IMR-90 (cell line): ENCODE measurements at regions of chr10 and their contacts with region 1.

Region 1: GRCh38 chr10:132223156-132223590 is 36.4 kb downstream of the DPYSL4 start:
- DNase-seq: peak; percentile 71
- ATAC-seq: peak; percentile 99
- H3K4me3 ChIP-seq: no peak overlapping the region
- H3K27ac ChIP-seq: no peak overlapping the region
- H3K4me1 ChIP-seq: no peaks in the 10 kb centered on the region
- H3K27me3 ChIP-seq: no peaks in the 10 kb centered on the region
- CTCF ChIP-seq: peak; percentile 100
- POLR2A ChIP-seq: peak; percentile 45; the same call in 1 of the 2 replicates
- RAD21 ChIP-seq: peak; percentile 99

Region 2: GRCh38 chr10:132193907-132194552 is 29.1 kb before region 1 on chr10:
- CTCF ChIA-PET with region 1: no interaction called
- POLR2A ChIA-PET with region 1: no interaction called
- dilution Hi-C with region 1: no loop called
- in situ Hi-C with region 1: no loop called
- intact Hi-C with region 1: no loop called
- DNase-seq: no peak
- ATAC-seq: peak; percentile 80
- H3K4me3 ChIP-seq: no peak overlapping the region
- H3K27ac ChIP-seq: no peak overlapping the region
- H3K4me1 ChIP-seq: no peaks in the 10 kb centered on the region
- H3K27me3 ChIP-seq: no peaks in the 10 kb centered on the region
- CTCF ChIP-seq: no peak
- POLR2A ChIP-seq: no peak
- RAD21 ChIP-seq: no peak

Region 3: DNA sequence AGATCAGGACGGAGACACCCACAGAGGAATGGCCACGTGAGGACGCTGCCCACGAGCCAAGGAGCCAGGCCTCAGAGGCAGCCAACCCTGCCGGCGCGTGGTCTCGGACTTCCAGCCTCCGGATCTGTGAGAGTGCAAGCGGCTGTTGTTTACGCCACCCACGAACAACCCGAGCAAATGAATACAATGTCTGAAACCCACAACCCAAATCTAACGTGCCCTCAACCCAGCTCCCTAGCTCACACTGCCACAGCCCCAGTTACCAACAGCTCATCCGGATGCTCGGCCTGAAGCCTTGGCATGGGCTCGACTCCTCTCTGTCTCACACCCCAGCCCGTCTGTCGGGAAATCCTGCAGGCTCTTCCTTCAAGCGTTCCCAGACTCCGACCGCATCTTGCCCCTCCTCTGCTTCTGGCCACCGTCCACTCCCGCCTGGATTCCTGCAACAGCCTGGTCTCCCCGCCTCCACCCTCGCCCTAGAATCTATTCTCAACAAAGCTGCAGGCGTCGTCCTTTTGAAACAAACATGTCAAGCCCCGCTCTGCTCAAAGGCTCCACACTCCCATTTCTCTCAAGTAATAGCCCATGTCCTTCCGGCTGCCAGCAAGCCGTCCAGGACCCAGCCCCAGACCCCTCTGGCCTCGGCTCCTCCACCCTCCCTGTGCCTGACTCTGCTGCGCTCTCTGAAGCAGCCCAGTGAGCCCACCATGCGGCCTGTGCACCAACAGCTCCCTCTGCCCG is 49.2 kb after region 1 on chr10:
- CTCF ChIA-PET with region 1: no interaction called
- POLR2A ChIA-PET with region 1: no interaction called
- dilution Hi-C with region 1: no loop called
- in situ Hi-C with region 1: no loop called
- intact Hi-C with region 1: no loop called
- DNase-seq: peak; percentile 60
- ATAC-seq: peak; percentile 89
- H3K4me3 ChIP-seq: no peak overlapping the region
- H3K27ac ChIP-seq: no peak overlapping the region
- H3K4me1 ChIP-seq: peaks cover 5% of the 10 kb centered on the region; the same call in 1 of the 2 replicates
- H3K27me3 ChIP-seq: peaks cover 5% of the 10 kb centered on the region
- CTCF ChIP-seq: no peak
- POLR2A ChIP-seq: no peak
- RAD21 ChIP-seq: 0 out of 2 replicates have a peak, but pooled peaks have one; percentile 0

Region 4: GRCh38 chr10:132347211-132347930 is 124.2 kb after region 1 on chr10:
- CTCF ChIA-PET with region 1: interaction called, 3 read pairs
- POLR2A ChIA-PET with region 1: no interaction called
- dilution Hi-C with region 1: loop called (anchors 25 kb)
- in situ Hi-C with region 1: loop called (anchors 5 kb)
- intact Hi-C with region 1: loop called (anchors 1 kb)
- DNase-seq: no peak
- ATAC-seq: no peak
- H3K4me3 ChIP-seq: no peak overlapping the region
- H3K27ac ChIP-seq: no peak overlapping the region
- H3K4me1 ChIP-seq: no peaks in the 10 kb centered on the region
- H3K27me3 ChIP-seq: no peaks in the 10 kb centered on the region
- CTCF ChIP-seq: no peak
- POLR2A ChIP-seq: no peak
- RAD21 ChIP-seq: no peak

Region 5: GRCh38 chr10:132452631-132453469 is 229.7 kb after region 1 on chr10:
- CTCF ChIA-PET with region 1: no interaction called
- POLR2A ChIA-PET with region 1: no interaction called
- dilution Hi-C with region 1: no loop called
- in situ Hi-C with region 1: loop called (anchors 5 kb)
- intact Hi-C with region 1: loop called (anchors 1 kb)
- DNase-seq: peak; percentile 72
- ATAC-seq: peak; percentile 97
- H3K4me3 ChIP-seq: peak overlapping the region; percentile 15; the same call in 1 of the 2 replicates
- H3K27ac ChIP-seq: no peak overlapping the region
- H3K4me1 ChIP-seq: peaks cover 6% of the 10 kb centered on the region
- H3K27me3 ChIP-seq: peaks cover 9% of the 10 kb centered on the region; the same call in 1 of the 2 replicates
- CTCF ChIP-seq: peak; percentile 95
- POLR2A ChIP-seq: no peak
- RAD21 ChIP-seq: peak; percentile 89

Region 6: DNA sequence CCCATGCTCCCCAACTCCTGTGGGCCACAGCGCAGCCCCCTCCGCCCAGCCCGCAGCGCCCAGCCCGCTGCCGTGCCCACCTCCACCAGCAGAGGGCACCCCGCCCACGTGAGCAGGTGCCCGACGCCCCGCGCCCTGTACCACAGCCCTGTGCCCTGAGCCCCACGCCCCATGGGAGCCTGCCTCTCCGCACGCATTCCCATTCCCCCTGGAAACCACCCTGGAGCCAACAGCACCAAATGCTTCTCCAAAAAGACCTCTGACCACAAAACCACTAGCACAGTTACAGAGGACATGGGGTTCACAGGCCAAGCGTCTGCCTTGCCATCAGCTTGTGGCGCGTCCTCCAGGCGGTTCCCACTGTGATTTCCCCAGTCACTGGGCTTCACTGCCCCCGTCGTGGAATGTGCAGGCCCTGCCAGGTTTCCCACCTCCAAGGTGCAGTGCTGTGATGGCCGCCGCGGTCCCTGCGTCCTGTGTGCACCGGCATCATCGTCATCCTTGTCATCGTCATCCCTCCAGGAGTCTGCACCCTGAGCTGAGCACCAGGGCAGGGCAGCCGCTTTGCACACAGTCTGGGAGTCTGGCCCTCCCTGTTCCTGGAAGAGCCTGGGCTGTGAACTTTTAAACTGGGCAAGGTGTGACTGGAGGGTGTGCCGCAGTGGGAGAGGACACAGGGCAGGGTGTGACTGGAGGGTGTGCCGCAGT is 235.6 kb after region 1 on chr10:
- CTCF ChIA-PET with region 1: no interaction called
- POLR2A ChIA-PET with region 1: no interaction called
- dilution Hi-C with region 1: no loop called
- in situ Hi-C with region 1: loop called (anchors 5 kb)
- intact Hi-C with region 1: loop called (anchors 1 kb)
- DNase-seq: no peak
- ATAC-seq: peak; percentile 95
- H3K4me3 ChIP-seq: no peak overlapping the region
- H3K27ac ChIP-seq: no peak overlapping the region
- H3K4me1 ChIP-seq: no peaks in the 10 kb centered on the region
- H3K27me3 ChIP-seq: peaks cover 9% of the 10 kb centered on the region; the same call in 1 of the 2 replicates
- CTCF ChIP-seq: peak; percentile 91
- POLR2A ChIP-seq: no peak
- RAD21 ChIP-seq: peak; percentile 97